ENCODE measurements at regions of chr4 and their contacts with region 1.

Region 1: GRCh38 chr4:155809835-155810234 is 51.0 kb downstream of the GUCY1B1 start:
- DNase-seq: peak; percentile 67
- H3K4me3 ChIP-seq: no peak overlapping the region
- H3K27ac ChIP-seq: peak overlapping the region; percentile 27
- H3K27me3 ChIP-seq: no peaks in the 10 kb centered on the region
- CTCF ChIP-seq: peak; percentile 50

Region 2: GRCh38 chr4:155946486-155946885 is 136.7 kb after region 1 on chr4:
- in situ Hi-C with region 1: loop called (anchors 25 kb)
- DNase-seq: peak; percentile 21
- H3K4me3 ChIP-seq: no peak overlapping the region
- H3K27ac ChIP-seq: no peak overlapping the region
- H3K27me3 ChIP-seq: no peaks in the 10 kb centered on the region
- CTCF ChIP-seq: no peak